ENCODE measurements at regions of chr10 and their contacts with region 1.

Region 1: GRCh38 chr10:117226824-117227451 is 14.0 kb upstream of the SLC18A2 start:
- DNase-seq: peak in 1 of 2 experiments; percentile 54
- H3K4me3 ChIP-seq: no peak overlapping the region
- H3K4me1 ChIP-seq: no peaks in the 10 kb centered on the region
- H3K27me3 ChIP-seq: no peaks in the 10 kb centered on the region

Region 2: GRCh38 chr10:117318909-117319308 is 92.0 kb after region 1 on chr10:
- in situ Hi-C with region 1: loop called (anchors 5 kb)
- DNase-seq: peak in 1 of 2 experiments; percentile 18
- H3K4me3 ChIP-seq: no peak overlapping the region
- H3K4me1 ChIP-seq: no peaks in the 10 kb centered on the region
- H3K27me3 ChIP-seq: no peaks in the 10 kb centered on the region

Region 3: DNA sequence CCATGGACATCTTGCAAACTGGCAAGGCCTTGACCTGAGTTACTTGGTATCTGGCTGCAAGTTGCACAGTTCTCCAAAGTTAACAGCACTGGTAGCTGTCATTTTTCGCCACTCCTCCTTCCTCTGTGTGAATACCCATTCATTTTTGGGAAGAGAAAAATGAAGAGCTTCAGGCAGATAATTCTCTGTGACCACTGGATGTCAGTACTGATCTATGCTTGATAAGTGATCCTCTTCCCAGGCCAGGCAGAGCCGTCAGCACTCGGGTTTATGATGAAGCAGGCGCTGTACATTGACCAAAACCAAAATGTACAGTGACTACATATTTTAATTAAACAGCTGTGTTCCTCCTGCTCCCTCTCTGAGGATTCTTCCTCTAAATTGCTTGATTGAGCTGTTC is 204.2 kb after region 1 on chr10:
- in situ Hi-C with region 1: loop called (anchors 10 kb)
- DNase-seq: no peak
- H3K4me3 ChIP-seq: no peak overlapping the region
- H3K4me1 ChIP-seq: no peaks in the 10 kb centered on the region
- H3K27me3 ChIP-seq: 0 out of 2 replicates have a peak, but pooled peaks cover 3% of the 10 kb centered on the region

Measured in HAP-1 (cell line).